ENCODE measurements at regions of chr13 and their contacts with region 1.

Region 1: GRCh38 chr13:28792992-28793391 is 27.1 kb upstream of the MTUS2 start:
- DNase-seq: no peak
- H3K4me3 ChIP-seq: no peak overlapping the region
- H3K27ac ChIP-seq: no peak overlapping the region
- H3K4me1 ChIP-seq: peaks cover 4% of the 10 kb centered on the region
- H3K27me3 ChIP-seq: peaks cover 28 to 31% of the 10 kb centered on the region in 2 experiments
- CTCF ChIP-seq: no peak
- POLR2A ChIP-seq: no peak

Region 2: DNA sequence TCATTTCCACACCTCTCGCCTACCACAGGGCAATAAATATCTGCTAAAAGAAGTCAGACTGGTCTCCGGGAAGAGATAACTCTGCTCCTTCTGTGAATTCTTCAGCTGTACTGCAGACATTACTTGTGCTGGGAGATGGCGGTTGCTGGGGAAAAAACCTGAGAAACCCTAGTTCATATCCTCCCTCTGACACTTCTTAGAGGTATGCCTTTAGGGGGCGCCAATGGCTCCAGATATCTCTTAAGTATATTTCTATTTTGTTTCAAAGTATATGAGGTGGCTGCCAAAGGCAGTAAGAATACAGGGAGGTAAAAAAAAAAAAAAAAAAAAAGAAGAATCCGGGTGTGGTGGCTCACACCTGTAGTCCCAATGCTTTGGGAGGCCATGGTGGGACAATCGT is 479.4 kb before region 1 on chr13:
- CTCF ChIA-PET with region 1: interaction called, 9 read pairs
- POLR2A ChIA-PET with region 1: no interaction called
- dilution Hi-C with region 1: no loop called
- intact Hi-C with region 1: loop called (anchors 1 kb)
- DNase-seq: peak; percentile 66
- H3K4me3 ChIP-seq: no peak overlapping the region
- H3K27ac ChIP-seq: no peak overlapping the region
- H3K4me1 ChIP-seq: no peaks in the 10 kb centered on the region
- H3K27me3 ChIP-seq: no peaks in the 10 kb centered on the region
- CTCF ChIP-seq: peak; percentile 44 to 48
- POLR2A ChIP-seq: no peak

Region 3: GRCh38 chr13:28442839-28443238 is 350.2 kb before region 1 on chr13:
- CTCF ChIA-PET with region 1: no interaction called
- POLR2A ChIA-PET with region 1: no interaction called
- dilution Hi-C with region 1: no loop called
- intact Hi-C with region 1: no loop called
- DNase-seq: no peak
- H3K4me3 ChIP-seq: no peak overlapping the region
- H3K27ac ChIP-seq: no peak overlapping the region
- H3K4me1 ChIP-seq: peaks cover 23% of the 10 kb centered on the region
- H3K27me3 ChIP-seq: no peaks in the 10 kb centered on the region
- CTCF ChIP-seq: no peak
- POLR2A ChIP-seq: no peak

Region 4: DNA sequence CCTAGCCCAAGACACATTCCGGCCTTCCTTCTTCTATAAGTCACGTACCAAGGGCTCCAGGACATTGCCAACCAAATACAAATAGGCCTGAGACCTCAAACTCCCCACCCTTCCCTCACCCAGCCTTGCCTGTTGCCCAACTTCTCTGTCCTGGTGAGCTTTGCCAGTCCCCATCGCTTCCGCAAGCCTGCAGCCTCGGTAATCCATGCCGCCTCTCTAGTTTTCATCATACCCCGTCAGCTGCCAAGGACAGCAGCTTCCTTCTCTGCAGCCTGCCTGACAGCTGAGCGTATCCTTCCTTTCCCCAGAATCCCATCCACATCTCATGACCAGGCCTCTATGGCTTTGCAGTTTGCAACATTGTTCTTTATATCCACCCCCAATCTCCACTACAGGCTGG is 170.7 kb before region 1 on chr13:
- CTCF ChIA-PET with region 1: no interaction called
- POLR2A ChIA-PET with region 1: no interaction called
- dilution Hi-C with region 1: no loop called
- intact Hi-C with region 1: no loop called
- DNase-seq: no peak
- H3K4me3 ChIP-seq: no peak overlapping the region
- H3K27ac ChIP-seq: no peak overlapping the region
- H3K4me1 ChIP-seq: no peaks in the 10 kb centered on the region
- H3K27me3 ChIP-seq: no peaks in the 10 kb centered on the region
- CTCF ChIP-seq: no peak
- POLR2A ChIP-seq: no peak

Region 5: GRCh38 chr13:28679628-28680027 is 113.4 kb before region 1 on chr13:
- CTCF ChIA-PET with region 1: interaction called, 135 read pairs
- POLR2A ChIA-PET with region 1: no interaction called
- dilution Hi-C with region 1: no loop called
- intact Hi-C with region 1: loop called (anchors 1 kb)
- DNase-seq: peak; percentile 33
- H3K4me3 ChIP-seq: no peak overlapping the region
- H3K27ac ChIP-seq: no peak overlapping the region
- H3K4me1 ChIP-seq: no peaks in the 10 kb centered on the region
- H3K27me3 ChIP-seq: no peaks in the 10 kb centered on the region
- CTCF ChIP-seq: peak in 1 of 2 donors; percentile 18
- POLR2A ChIP-seq: no peak

Region 6: DNA sequence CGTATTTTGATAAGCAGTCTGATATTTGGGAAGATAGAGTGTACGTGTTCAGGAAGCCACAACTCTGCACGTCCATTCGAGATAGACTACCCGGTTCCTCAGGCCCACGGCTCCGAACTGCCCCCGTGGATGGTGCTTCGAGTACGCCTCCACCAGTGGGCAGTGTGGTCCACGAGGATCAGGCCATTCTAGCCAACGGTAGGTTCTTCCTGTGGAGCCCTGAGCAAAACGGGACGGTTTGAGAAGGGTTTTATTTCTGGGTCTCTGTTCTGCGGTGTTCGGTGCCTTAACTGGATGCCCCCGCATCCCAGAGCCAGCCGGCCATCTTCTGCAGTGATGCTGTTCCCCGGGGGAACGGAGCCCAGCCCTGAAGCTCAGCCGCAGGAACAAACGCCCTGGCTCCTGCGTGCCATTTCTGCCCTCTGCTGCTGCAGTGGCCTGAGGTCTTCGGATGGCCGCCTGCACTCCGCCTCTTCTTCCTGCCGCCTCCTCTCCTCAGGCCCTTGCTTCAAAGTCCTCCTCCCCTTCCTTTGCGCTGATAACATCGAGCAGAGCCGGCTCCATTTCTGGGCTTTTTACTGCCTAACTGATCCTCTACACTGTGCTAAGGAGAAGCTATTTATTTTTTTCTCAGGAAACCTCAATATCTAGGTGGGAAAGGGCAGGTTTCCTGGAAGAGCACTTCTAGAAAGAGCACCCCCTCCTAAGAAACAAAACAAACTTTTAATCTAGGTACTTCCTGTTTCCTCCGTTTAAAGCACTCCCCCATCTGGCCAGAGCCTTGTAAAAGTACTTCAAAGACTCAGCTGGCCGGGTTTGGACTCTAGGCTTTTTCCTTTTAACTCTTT is 38.1 kb before region 1 on chr13:
- CTCF ChIA-PET with region 1: interaction called, 17 read pairs
- POLR2A ChIA-PET with region 1: no interaction called
- dilution Hi-C with region 1: no loop called
- intact Hi-C with region 1: loop called (anchors 2 kb)
- DNase-seq: peak; percentile 59
- H3K4me3 ChIP-seq: peak overlapping the region in 2 of 3 experiments; percentile 1 to 9
- H3K27ac ChIP-seq: no peak overlapping the region
- H3K4me1 ChIP-seq: peaks cover 30% of the 10 kb centered on the region
- H3K27me3 ChIP-seq: no peaks in the 10 kb centered on the region
- CTCF ChIP-seq: peak; percentile 4 to 13
- POLR2A ChIP-seq: no peak

Measured in endothelial cell of umbilical vein (primary cell).